ENCODE measurements at regions of chr1 and their contacts with region 1.

Region 1: DNA sequence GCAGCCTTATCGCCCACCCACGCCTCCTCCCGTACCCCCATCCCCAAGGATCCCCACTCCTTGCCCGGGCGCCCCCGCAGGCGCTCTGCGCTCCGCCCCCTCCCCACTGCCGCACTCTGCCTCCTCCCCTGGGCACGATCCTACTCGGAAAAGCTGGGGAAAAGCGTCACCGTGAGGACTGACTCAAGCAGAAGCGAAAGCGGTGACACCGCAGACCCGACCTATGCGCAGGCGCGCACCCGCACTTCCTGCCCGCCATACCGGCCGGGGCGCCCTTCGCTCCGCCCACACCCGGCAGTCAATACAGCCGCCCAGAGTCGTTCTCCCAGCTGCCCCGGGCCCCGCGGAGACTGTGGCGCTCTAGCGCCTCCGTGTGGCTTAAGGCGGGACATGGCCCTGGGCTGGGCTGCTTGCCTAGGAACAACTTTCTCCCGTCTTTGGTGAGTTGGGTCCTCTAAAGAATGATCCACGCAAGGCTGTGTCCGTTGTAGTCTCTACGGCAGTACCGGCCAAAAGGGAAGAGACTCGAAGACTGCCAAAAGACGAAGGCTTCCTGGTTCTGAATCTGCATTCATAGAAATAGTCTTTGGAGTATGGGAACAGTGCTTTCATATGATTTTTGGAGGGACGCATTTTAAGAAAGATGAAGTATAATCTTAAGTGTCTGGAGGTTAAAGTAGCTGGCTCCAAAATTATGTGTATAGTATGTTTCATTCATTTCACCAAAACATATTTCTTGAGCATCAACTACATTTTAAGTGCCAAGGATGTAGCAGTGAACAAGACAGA is at the start of gene OMA1:
- DNase-seq: peak; percentile 98
- ATAC-seq: peak; percentile 93
- H3K4me3 Mint-ChIP-seq: peak within 1 kb of the TSS; percentile 96
- H3K27ac Mint-ChIP-seq: peak within 1 kb of the TSS; percentile 97
- H3K4me1 Mint-ChIP-seq: peaks cover 19% of the 10 kb centered on the region
- H3K27me3 Mint-ChIP-seq: peaks cover 2% of the 10 kb centered on the region
- CTCF ChIP-seq: peak; percentile 24
- total RNA-seq, gene OMA1: 47.8 and 48.7 TPM in 2 replicates

Region 2: GRCh38 chr1:56831871-56832693 is 1714.6 kb before region 1 on chr1:
- CTCF ChIA-PET with region 1: interaction called, 11 read pairs
- POLR2A ChIA-PET with region 1: interaction called, 4 read pairs
- intact Hi-C with region 1: no loop called
- DNase-seq: peak; percentile 34
- ATAC-seq: peak; percentile 47
- H3K4me3 Mint-ChIP-seq: no peak overlapping the region
- H3K27ac Mint-ChIP-seq: no peak overlapping the region
- H3K4me1 Mint-ChIP-seq: peaks cover 5% of the 10 kb centered on the region
- H3K27me3 Mint-ChIP-seq: peaks cover 11% of the 10 kb centered on the region
- CTCF ChIP-seq: peak; percentile 96

Region 3: DNA sequence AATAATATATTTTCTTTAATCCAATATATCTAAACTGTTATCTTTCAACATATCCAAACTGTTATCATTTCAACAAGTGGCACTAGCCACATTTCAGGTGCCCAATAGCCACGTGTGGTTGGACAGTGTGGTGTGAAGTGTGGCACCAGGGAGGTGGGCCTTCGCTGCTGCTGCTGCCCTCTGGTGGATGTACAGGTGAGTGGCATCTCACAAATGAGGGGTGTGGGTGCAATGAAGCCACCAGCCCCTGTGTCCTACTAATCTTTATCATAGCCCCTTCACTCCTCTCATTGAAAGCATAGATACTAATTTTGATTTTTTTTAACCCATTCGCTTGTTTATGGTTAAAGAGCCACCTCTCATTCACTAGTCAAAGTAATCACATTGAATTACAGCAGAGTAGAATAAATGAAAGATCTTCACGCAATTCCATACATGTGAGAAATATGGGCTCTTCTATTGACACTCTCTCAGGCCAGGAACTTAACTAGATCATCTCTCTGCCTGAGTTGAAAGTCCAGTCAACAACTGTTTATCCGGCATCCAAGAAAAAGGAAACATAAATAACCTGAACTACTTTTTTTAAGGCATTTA is 499.4 kb before region 1 on chr1:
- CTCF ChIA-PET with region 1: no interaction called
- POLR2A ChIA-PET with region 1: no interaction called
- intact Hi-C with region 1: loop called (anchors 1 kb)
- DNase-seq: no peak
- ATAC-seq: peak; percentile 42
- H3K4me3 Mint-ChIP-seq: no peak overlapping the region
- H3K27ac Mint-ChIP-seq: no peak overlapping the region
- H3K4me1 Mint-ChIP-seq: no peaks in the 10 kb centered on the region
- H3K27me3 Mint-ChIP-seq: no peaks in the 10 kb centered on the region
- CTCF ChIP-seq: no peak

Region 4: GRCh38 chr1:58395355-58395754 is 151.4 kb before region 1 on chr1:
- CTCF ChIA-PET with region 1: no interaction called
- POLR2A ChIA-PET with region 1: interaction called, 7 read pairs
- intact Hi-C with region 1: loop called (anchors 1 kb)
- DNase-seq: no peak
- ATAC-seq: no peak
- H3K4me3 Mint-ChIP-seq: no peak overlapping the region
- H3K27ac Mint-ChIP-seq: no peak overlapping the region
- H3K4me1 Mint-ChIP-seq: no peaks in the 10 kb centered on the region
- H3K27me3 Mint-ChIP-seq: no peaks in the 10 kb centered on the region
- CTCF ChIP-seq: no peak

Region 5: GRCh38 chr1:58652651-58653184 is 106.0 kb after region 1 on chr1:
- CTCF ChIA-PET with region 1: interaction called, 3 read pairs
- POLR2A ChIA-PET with region 1: interaction called, 7 read pairs
- intact Hi-C with region 1: loop called (anchors 1 kb)
- DNase-seq: no peak
- ATAC-seq: peak; percentile 75
- H3K4me3 Mint-ChIP-seq: no peak overlapping the region
- H3K27ac Mint-ChIP-seq: no peak overlapping the region
- H3K4me1 Mint-ChIP-seq: peaks cover 3% of the 10 kb centered on the region
- H3K27me3 Mint-ChIP-seq: no peaks in the 10 kb centered on the region
- CTCF ChIP-seq: peak; percentile 68

Region 6: DNA sequence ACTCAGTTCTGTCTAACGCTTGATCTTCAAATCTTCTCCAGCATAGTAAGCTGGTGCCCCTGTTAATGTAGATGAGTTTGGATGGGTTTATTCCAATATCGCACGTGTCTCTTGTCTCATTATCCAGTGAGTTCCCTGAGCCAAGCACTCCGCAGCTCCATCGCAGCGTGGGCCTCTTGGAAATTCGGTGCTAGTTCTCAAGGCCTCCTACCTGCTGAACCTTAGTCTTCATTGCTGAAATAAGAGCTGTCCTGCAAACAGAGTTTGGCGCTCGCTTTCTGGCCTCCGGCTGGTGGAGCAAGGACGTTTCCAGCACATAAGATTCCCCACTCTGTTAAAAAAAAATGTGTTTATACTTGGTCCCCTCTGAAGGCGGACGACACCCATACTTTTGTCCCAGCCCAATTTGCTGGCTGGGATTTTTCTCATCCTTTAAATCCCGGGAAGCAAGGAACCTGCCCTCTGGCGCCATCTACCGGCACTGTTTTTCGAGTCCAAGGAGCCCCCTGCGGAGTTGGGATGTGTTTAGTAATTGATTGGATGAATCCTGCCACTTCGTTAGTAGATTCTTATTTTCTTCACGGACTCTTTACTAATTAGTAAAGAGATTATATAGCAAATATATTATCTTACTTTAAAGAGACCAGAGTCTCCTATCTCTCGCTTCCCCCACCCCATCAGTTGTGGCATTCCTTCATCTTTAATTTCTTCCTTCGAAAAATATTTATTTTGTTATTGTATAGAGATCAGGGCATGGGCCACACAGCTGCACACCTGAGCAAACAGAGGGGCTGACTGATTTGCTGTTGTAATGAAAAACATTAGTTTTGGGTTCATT is 222.5 kb after region 1 on chr1:
- CTCF ChIA-PET with region 1: no interaction called
- POLR2A ChIA-PET with region 1: no interaction called
- intact Hi-C with region 1: no loop called
- DNase-seq: no peak
- ATAC-seq: no peak
- H3K4me3 Mint-ChIP-seq: no peak overlapping the region
- H3K27ac Mint-ChIP-seq: no peak overlapping the region
- H3K4me1 Mint-ChIP-seq: peaks cover 15% of the 10 kb centered on the region
- H3K27me3 Mint-ChIP-seq: peaks cover 6% of the 10 kb centered on the region
- CTCF ChIP-seq: no peak

Region 7: DNA sequence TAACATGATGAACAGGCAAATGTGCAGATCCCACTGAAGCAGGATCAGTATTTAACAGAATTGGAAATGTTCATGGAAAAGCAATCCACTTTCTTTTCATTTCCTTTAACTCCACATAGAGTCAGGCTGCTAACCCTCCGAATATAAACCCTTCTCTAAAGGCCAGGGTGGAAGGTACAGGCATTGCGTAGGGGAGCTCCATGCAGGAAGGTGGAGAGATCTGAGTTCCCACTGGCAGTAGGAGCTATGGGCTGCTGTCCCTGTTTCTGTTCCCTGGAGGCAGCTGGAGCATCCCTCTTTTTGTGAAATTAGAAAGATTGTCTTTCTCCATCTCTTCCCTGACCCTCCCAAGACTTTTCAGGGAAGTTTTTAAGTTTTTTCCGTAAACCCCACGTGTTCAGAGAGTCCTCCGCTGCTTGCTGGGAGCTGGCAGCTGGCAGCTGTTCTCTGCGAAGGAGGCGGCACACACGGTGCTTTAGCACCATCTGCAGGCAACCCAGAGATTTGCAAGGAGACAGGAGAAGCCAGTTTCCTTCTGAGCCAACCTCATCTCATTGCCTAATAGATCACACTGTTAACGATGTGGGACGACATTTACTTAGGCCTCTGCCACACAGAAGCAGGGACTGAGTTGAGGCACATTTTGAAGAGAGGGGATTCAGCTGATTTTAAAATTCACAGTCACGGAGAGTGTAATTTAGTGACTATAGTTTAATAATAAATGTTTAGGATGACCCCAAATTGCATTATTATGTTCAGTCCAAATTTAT is 1212.6 kb after region 1 on chr1:
- CTCF ChIA-PET with region 1: no interaction called
- POLR2A ChIA-PET with region 1: interaction called, 4 read pairs
- intact Hi-C with region 1: loop called (anchors 1 kb)
- DNase-seq: peak; percentile 50
- ATAC-seq: peak; percentile 93
- H3K4me3 Mint-ChIP-seq: peak overlapping the region; percentile 35
- H3K27ac Mint-ChIP-seq: no peak overlapping the region
- H3K4me1 Mint-ChIP-seq: peaks cover 4% of the 10 kb centered on the region
- H3K27me3 Mint-ChIP-seq: no peaks in the 10 kb centered on the region
- CTCF ChIP-seq: peak; percentile 96